ENCODE measurements at regions of chr12 and their contacts with region 1.

Region 1: GRCh38 chr12:56751712-56752598 is at the start of gene PRIM1:
- DNase-seq: peak; percentile 88
- ATAC-seq: peak; percentile 82
- H3K4me3 ChIP-seq: peak within 1 kb of the TSS; percentile 90 to 100 (median 97)
- H3K4me3 Mint-ChIP-seq: peak within 1 kb of the TSS; percentile 97
- H3K27ac ChIP-seq: peak within 1 kb of the TSS; percentile 79 to 80
- H3K27ac Mint-ChIP-seq: peak within 1 kb of the TSS; percentile 96
- H3K4me1 ChIP-seq: peaks cover 38% of the 10 kb centered on the region in 2 donors
- H3K4me1 Mint-ChIP-seq: peaks cover 44% of the 10 kb centered on the region
- H3K27me3 ChIP-seq: no peaks in the 10 kb centered on the region
- H3K27me3 Mint-ChIP-seq: no peaks in the 10 kb centered on the region
- CTCF ChIP-seq: peak; percentile 21
- total RNA-seq, gene PRIM1: 25.2 and 25.4 TPM in 2 replicates

Region 2: GRCh38 chr12:56541631-56542030 is 210.3 kb before region 1 on chr12:
- CTCF ChIA-PET with region 1: no interaction called
- POLR2A ChIA-PET with region 1: no interaction called
- intact Hi-C with region 1: no loop called
- DNase-seq: no peak
- ATAC-seq: no peak
- H3K4me3 ChIP-seq: no peak overlapping the region
- H3K4me3 Mint-ChIP-seq: no peak overlapping the region
- H3K27ac ChIP-seq: no peak overlapping the region
- H3K27ac Mint-ChIP-seq: no peak overlapping the region
- H3K4me1 ChIP-seq: no peaks in the 10 kb centered on the region
- H3K4me1 Mint-ChIP-seq: no peaks in the 10 kb centered on the region
- H3K27me3 ChIP-seq: no peaks in the 10 kb centered on the region
- H3K27me3 Mint-ChIP-seq: no peaks in the 10 kb centered on the region
- CTCF ChIP-seq: no peak

Region 3: DNA sequence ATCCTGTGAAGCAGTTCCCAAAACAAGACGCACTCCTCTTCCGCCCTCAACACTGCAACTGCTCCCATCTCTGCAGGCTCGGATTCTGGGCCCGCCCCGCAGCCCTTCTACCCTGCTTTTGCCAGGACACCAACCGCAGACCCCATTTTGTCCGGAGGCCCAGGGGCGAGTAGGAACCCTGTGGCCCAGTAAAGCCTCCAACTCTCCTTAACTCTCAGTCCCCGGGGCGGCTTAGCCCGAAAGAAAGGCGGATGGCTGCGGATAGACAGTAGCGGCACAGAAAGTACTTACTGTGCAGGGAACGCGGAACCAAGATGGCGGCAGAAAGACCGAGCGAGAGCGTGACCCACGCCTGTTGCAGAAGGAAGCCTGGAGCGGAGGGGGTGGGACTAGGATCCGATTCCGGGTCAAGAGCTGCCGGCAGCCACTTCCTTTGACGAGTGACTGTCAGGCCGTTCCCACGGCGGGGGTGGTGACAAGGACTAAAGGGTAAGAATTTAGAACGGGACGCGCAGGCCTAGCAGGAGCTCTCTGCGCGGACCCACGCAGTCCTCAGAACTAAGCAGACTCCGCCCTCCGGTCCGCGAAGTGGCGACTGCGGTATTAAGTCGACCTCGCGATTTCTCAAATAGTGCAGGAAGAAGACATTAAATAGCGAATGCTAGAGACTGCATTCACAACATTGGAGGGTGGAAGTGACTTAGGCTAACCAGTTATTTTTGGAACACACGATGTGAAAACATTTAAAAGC is 26.8 kb before region 1 on chr12 and contains the start of gene NACA:
- CTCF ChIA-PET with region 1: interaction called, 7 read pairs
- POLR2A ChIA-PET with region 1: interaction called, 5 read pairs
- intact Hi-C with region 1: loop called (anchors 1 kb)
- DNase-seq: peak; percentile 98
- ATAC-seq: peak; percentile 95
- H3K4me3 ChIP-seq: peak within 1 kb of the TSS; percentile 76 to 99 (median 90)
- H3K4me3 Mint-ChIP-seq: peak within 1 kb of the TSS; percentile 95
- H3K27ac ChIP-seq: peak within 1 kb of the TSS; percentile 81 to 92
- H3K27ac Mint-ChIP-seq: peak within 1 kb of the TSS; percentile 95
- H3K4me1 ChIP-seq: peaks cover 47 to 49% of the 10 kb centered on the region in 2 donors
- H3K4me1 Mint-ChIP-seq: peaks cover 59% of the 10 kb centered on the region
- H3K27me3 ChIP-seq: no peaks in the 10 kb centered on the region
- H3K27me3 Mint-ChIP-seq: no peaks in the 10 kb centered on the region
- CTCF ChIP-seq: no peak
- total RNA-seq, gene NACA: 993 and 1,076 TPM in 2 replicates

Region 4: DNA sequence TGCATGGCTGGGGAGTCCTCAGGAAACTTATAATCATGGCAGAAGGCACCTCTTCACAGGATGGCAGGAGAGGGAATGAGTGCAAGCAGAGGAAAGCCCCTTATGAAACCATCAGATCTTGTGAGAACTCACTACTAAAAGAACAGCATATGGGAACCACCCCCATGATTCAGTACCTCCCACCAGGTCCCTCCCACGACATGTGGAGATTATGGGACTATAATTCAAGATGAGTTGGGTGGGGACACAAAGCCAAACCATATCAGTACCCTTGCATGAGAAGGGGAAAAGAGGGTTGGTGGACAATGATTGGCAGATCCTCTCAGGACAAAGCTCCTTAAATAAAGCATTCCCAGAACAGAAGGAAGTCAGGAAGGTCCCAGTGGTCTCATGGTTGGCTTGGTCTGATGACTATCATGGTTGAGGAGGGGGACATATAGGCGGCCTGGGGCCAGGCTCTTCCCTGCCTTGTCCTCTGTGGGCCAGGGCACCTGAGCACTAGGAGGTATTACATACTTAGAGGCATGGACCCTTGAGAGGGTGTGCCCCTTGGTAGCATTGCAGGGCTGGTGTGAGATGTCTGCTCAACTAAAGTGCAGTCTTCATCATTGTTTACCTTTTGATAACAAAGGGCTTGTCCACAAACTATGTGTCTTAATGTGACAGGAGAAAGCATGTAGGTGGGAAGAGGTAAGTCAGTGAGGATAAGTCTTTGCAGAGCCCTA is 33.3 kb after region 1 on chr12:
- CTCF ChIA-PET with region 1: no interaction called
- POLR2A ChIA-PET with region 1: no interaction called
- intact Hi-C with region 1: no loop called
- DNase-seq: no peak
- ATAC-seq: no peak
- H3K4me3 ChIP-seq: no peak overlapping the region
- H3K4me3 Mint-ChIP-seq: no peak overlapping the region
- H3K27ac ChIP-seq: no peak overlapping the region
- H3K27ac Mint-ChIP-seq: no peak overlapping the region
- H3K4me1 ChIP-seq: no peaks in the 10 kb centered on the region
- H3K4me1 Mint-ChIP-seq: no peaks in the 10 kb centered on the region
- H3K27me3 ChIP-seq: no peaks in the 10 kb centered on the region
- H3K27me3 Mint-ChIP-seq: no peaks in the 10 kb centered on the region
- CTCF ChIP-seq: no peak

Region 5: DNA sequence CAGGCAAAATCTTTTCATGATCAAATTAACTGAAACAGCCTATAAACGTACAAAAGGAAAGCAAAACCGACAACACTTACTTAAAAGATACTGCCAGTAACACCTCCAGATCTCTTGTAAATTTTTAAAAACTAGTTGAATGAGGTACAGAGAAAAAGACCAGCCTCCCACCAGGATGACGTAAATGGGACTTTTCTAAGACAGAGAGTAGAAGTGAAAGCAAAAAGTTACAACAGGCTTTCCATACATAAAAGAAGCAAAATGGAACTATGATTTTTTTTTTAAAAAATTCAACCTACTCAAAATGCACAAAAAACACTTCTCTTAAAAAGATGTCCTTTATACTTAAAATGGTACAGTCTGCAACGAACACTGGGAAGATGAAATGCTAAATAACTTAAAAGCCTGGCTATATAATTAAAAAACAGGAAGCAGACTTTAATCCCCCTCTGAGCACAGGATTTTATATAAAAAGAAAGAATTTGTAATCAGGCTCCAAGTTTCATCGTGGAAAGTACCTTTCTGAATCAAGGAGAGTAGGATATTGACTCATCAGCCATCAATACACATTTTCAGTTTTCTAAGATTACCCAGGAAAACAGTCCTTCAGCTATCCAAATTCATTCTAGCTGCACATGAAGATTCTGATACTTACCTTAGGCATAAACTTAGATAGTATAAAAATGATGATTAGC is 312.2 kb after region 1 on chr12:
- CTCF ChIA-PET with region 1: interaction called, 7 read pairs
- POLR2A ChIA-PET with region 1: no interaction called
- intact Hi-C with region 1: loop called (anchors 2 kb)
- DNase-seq: peak; percentile 84
- ATAC-seq: peak; percentile 85
- H3K4me3 ChIP-seq: peak overlapping the region in 2 of 5 experiments; percentile 3 to 53
- H3K4me3 Mint-ChIP-seq: peak overlapping the region; percentile 57
- H3K27ac ChIP-seq: peak overlapping the region; percentile 61 to 87
- H3K27ac Mint-ChIP-seq: peak overlapping the region; percentile 46
- H3K4me1 ChIP-seq: peaks cover 14 to 25% of the 10 kb centered on the region in 2 donors
- H3K4me1 Mint-ChIP-seq: peaks cover 38% of the 10 kb centered on the region
- H3K27me3 ChIP-seq: no peaks in the 10 kb centered on the region
- H3K27me3 Mint-ChIP-seq: no peaks in the 10 kb centered on the region
- CTCF ChIP-seq: no peak

Region 6: DNA sequence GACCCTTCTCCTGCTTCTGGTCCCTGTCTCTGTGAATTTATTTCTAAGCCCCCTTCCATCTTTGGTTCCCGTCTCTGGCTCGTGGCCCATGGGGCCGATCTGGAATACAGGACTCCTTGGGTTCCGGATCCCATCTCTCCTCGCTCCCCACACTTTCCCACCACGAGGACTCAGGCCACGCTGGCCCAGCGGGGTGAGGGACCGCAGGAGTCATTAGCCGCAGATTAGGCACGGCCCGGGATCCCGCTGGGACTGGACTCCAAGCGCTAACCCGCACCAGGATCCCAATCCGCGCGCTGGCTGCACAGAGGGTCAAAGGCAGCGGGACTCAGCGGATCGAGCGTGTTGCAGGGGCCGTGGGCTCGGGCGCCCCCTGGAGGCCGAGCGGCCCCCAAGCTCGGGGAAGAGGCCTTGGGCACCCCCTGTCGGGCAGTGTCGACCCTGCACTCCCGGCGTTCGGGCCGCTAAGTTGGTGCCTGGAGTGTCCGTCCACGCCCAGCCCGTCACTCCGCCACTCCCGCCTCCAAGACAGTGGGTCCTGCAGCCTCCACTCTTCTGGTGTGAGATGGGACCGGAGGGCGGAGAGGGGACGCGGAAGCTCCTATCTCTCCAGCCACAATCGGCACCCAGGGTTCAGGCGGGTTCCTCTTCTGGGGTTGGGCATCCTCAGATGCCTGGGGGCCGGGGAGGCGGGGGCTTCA is 487.0 kb after region 1 on chr12:
- CTCF ChIA-PET with region 1: no interaction called
- POLR2A ChIA-PET with region 1: no interaction called
- intact Hi-C with region 1: loop called (anchors 10 kb)
- DNase-seq: peak; percentile 93
- ATAC-seq: peak; percentile 46
- H3K4me3 ChIP-seq: peak overlapping the region; percentile 19 to 79 (median 75)
- H3K4me3 Mint-ChIP-seq: peak overlapping the region; percentile 89
- H3K27ac ChIP-seq: no peak overlapping the region
- H3K27ac Mint-ChIP-seq: peak overlapping the region; percentile 92
- H3K4me1 ChIP-seq: peaks cover 92 to 99% of the 10 kb centered on the region in 2 donors
- H3K4me1 Mint-ChIP-seq: peaks cover 92% of the 10 kb centered on the region
- H3K27me3 ChIP-seq: peaks cover 0 to 70% (median 30%) of the 10 kb centered on the region in 4 experiments
- H3K27me3 Mint-ChIP-seq: peaks cover 12% of the 10 kb centered on the region
- CTCF ChIP-seq: peak; percentile 100